Breast epithelium (tissue), 4 donors: ENCODE measurements at regions of chr22 and their contacts with region 1.

Region 1: DNA sequence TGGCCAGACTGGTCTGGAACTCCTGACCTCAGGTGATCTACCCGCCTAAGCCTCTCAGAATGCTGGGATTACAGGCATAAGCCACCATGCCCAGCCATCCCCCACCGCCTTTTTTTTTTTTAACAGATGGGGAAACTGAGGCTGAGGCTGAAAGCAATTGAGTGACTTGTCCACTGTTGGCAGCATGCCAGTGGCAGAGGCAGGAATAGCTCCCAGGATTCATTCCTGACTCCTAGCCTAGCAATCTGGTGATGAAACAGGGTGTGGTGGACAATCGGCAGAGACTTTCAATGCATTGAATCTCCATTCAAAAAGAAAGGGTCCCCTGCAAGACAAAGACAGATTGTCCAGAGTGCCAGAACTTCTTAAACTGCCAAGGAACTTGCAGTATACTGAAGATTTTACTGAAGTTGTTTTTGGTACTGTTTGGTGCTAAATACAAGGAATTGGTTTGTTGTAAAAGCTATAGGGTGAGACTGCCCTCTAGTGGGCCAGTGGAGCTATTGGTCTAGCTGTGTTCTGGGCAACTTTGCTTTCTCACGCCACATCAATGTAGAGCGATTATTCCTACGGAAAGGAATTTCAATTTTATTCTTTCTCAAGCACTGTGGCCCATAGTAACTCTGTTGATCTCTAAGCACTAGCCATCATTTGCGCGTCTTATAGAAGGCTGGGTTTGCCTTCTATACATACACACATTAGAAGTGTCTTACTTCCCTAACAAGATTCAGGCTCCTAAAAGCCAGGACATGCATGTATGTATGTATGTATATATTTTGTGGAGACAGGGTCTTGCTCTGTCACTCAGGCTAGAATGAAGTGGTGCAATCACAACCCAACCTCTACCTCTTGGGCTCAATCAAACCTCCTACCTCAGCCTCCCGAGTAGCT is 21.0 kb downstream of the C22orf31 start:
- DNase-seq: peak; percentile 55 to 61
- H3K4me3 ChIP-seq: no peak overlapping the region
- H3K27ac ChIP-seq: peak overlapping the region in 1 of 2 donors; percentile 8
- H3K4me1 ChIP-seq: peaks cover 0 to 8% of the 10 kb centered on the region in 2 donors
- H3K27me3 ChIP-seq: no peaks in the 10 kb centered on the region
- CTCF ChIP-seq: peak; percentile 85 to 95 (median 91)
- POLR2A ChIP-seq: no peak

Region 2: DNA sequence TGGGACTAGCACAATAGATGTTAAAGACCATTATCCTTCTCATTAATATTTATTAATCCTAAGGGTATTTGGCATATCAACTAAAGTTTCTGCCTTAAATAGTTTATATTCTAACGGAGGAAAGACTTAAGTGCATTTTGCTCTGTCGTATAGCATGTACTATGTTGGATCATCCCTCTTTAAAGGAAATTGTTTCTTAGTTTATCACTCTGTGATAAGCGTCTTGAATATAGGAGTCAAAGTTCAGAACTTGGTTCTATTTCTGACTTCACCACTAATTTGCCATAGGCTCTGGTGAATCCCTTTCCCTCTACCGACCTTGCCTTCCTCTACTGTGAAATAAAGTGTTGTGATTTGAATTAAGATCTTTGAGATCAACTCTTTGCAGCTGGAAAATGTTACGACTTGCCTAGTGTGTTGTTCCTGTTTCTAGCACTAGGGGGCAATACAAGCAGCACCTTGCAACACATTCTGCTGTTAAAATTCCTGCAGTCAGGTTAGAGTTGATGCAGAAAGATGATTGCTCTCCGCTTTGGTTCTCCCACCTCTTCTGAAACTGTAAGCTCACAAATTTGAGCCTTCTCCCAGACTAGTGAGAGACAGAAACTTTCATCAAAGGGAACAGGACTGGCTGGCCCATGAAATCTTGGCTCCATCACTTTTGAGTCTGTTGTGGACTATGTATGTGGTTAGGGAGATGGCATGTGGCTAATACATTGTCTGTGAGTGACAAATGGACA is 185.1 kb before region 1 on chr22:
- intact Hi-C with region 1: loop called (anchors 10 kb)
- DNase-seq: peak in 1 of 2 donors; percentile 37
- H3K4me3 ChIP-seq: no peak overlapping the region
- H3K27ac ChIP-seq: no peak overlapping the region
- H3K4me1 ChIP-seq: no peaks in the 10 kb centered on the region
- H3K27me3 ChIP-seq: no peaks in the 10 kb centered on the region
- CTCF ChIP-seq: peak; percentile 90 to 98 (median 94)
- POLR2A ChIP-seq: no peak